ENCODE measurements at regions of chr4 and their contacts with region 1.

Region 1: GRCh38 chr4:158741326-158742025 is 18.3 kb upstream of the PPID start:
- DNase-seq: no peak
- ATAC-seq: no peak
- H3K4me3 ChIP-seq: no peak overlapping the region
- H3K27ac ChIP-seq: no peak overlapping the region
- H3K4me1 ChIP-seq: no peaks in the 10 kb centered on the region
- H3K27me3 ChIP-seq: no peaks in the 10 kb centered on the region
- CTCF ChIP-seq: no peak
- POLR2A ChIP-seq: no peak
- RAD21 ChIP-seq: no peak

Region 2: GRCh38 chr4:159060161-159060560 is 318.7 kb after region 1 on chr4:
- CTCF ChIA-PET with region 1: no interaction called
- POLR2A ChIA-PET with region 1: interaction called, 12 read pairs
- dilution Hi-C with region 1: no loop called
- in situ Hi-C with region 1: no loop called
- intact Hi-C with region 1: no loop called
- DNase-seq: no peak
- ATAC-seq: no peak
- H3K4me3 ChIP-seq: no peak overlapping the region
- H3K27ac ChIP-seq: no peak overlapping the region
- H3K4me1 ChIP-seq: no peaks in the 10 kb centered on the region
- H3K27me3 ChIP-seq: peaks cover 3% of the 10 kb centered on the region
- CTCF ChIP-seq: no peak
- POLR2A ChIP-seq: no peak
- RAD21 ChIP-seq: no peak